CD8-positive, alpha-beta memory T cell (primary cell): ENCODE measurements at regions of chr21 and their contacts with region 1.

Region 1: GRCh38 chr21:26159869-26160268 is 10.7 kb downstream of the APP start:
- DNase-seq: no peak
- H3K4me3 ChIP-seq: no peak overlapping the region
- H3K4me3 Mint-ChIP-seq: no peak overlapping the region
- H3K27ac ChIP-seq: no peak overlapping the region
- H3K27ac Mint-ChIP-seq: no peak overlapping the region
- H3K4me1 ChIP-seq: peaks cover 8% of the 10 kb centered on the region
- H3K4me1 Mint-ChIP-seq: no peaks in the 10 kb centered on the region
- H3K27me3 ChIP-seq: no peaks in the 10 kb centered on the region
- H3K27me3 Mint-ChIP-seq: peaks cover 3 to 8% of the 10 kb centered on the region in 2 donors

Region 2: GRCh38 chr21:26091480-26092018 is 68.3 kb before region 1 on chr21:
- CTCF ChIA-PET with region 1: no interaction called
- POLR2A ChIA-PET with region 1: no interaction called
- DNase-seq: no peak
- H3K4me3 ChIP-seq: no peak overlapping the region
- H3K4me3 Mint-ChIP-seq: no peak overlapping the region
- H3K27ac ChIP-seq: no peak overlapping the region
- H3K27ac Mint-ChIP-seq: no peak overlapping the region
- H3K4me1 ChIP-seq: no peaks in the 10 kb centered on the region
- H3K4me1 Mint-ChIP-seq: no peaks in the 10 kb centered on the region
- H3K27me3 ChIP-seq: no peaks in the 10 kb centered on the region
- H3K27me3 Mint-ChIP-seq: peaks cover 0 to 2% of the 10 kb centered on the region in 2 donors

Region 3: GRCh38 chr21:26170471-26171257 is 10.8 kb after region 1 on chr21 and contains the start of gene APP:
- CTCF ChIA-PET with region 1: interaction called, 10 read pairs
- POLR2A ChIA-PET with region 1: no interaction called
- DNase-seq: peak; percentile 64 to 89 (median 76)
- H3K4me3 ChIP-seq: peak within 1 kb of the TSS; percentile 74
- H3K4me3 Mint-ChIP-seq: peak within 1 kb of the TSS; percentile 86 to 95 (median 92)
- H3K27ac ChIP-seq: no peak within 1 kb of the TSS
- H3K27ac Mint-ChIP-seq: peak within 1 kb of the TSS in 4 of 8 donors; percentile 41 to 89 (median 58)
- H3K4me1 ChIP-seq: peaks cover 10% of the 10 kb centered on the region
- H3K4me1 Mint-ChIP-seq: peaks cover 12 to 23% (median 19%) of the 10 kb centered on the region in 3 donors
- H3K27me3 ChIP-seq: no peaks in the 10 kb centered on the region
- H3K27me3 Mint-ChIP-seq: peaks cover 17 to 47% of the 10 kb centered on the region in 2 donors
- total RNA-seq, gene APP: 15.2 to 15.3 TPM